Activated CD8-positive, alpha-beta T cell treated with anti-CD3 and anti-CD28 coated beads, Interleukin-2, amount 10 ng/mL, durations not matched to agents 7 days and 5 days (primary cell): ENCODE measurements at regions of chr2 and their contacts with region 1.

Region 1: GRCh38 chr2:27370026-27370815 is at the starts of genes EIF2B4 and SNX17:
- DNase-seq: peak; percentile 99
- ATAC-seq: peak; percentile 95
- H3K4me3 Mint-ChIP-seq: peak within 1 kb of the TSS; percentile 98
- H3K27ac Mint-ChIP-seq: peak within 1 kb of the TSS; percentile 95
- H3K4me1 Mint-ChIP-seq: peaks cover 49% of the 10 kb centered on the region
- H3K27me3 Mint-ChIP-seq: no peaks in the 10 kb centered on the region
- total RNA-seq, gene EIF2B4: 34.5 to 37.0 TPM
- total RNA-seq, gene SNX17: 119 to 120 TPM

Region 2: DNA sequence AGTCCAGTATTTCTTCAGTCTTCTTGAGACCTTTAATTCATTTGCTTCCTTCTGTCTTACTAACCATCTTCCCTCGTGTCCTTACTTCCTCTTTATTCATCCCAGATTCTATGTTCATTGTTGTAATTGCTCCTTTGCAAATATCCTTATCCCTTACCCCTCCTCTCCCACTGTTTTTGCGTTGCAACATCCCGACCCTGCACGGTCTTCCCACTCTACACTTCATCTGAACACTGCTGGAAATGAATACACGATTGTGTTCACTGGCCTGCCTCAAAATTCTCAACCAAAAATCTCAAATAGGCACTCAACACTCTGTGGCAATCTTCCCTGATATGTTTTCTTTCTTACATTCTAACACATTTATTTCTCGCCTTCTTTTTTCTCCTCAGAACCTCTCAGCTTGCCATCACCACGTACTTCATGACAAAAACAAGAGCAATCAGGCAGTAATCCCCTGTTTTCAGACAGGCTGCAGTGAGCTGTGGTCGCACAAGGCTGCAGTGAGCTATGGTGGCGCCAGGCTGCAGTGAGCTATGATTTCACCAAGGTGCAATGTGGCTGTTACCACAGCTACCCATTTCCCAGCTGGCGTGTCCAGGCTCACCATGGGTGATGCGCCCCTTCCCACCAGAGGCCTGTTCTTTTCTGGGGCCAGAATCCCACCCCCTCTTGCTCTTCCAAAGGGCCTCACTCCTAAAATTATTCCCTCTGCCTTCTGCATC is 195.7 kb before region 1 on chr2:
- CTCF ChIA-PET with region 1: no interaction called
- POLR2A ChIA-PET with region 1: no interaction called
- DNase-seq: no peak
- ATAC-seq: no peak
- H3K4me3 Mint-ChIP-seq: no peak overlapping the region
- H3K27ac Mint-ChIP-seq: no peak overlapping the region
- H3K4me1 Mint-ChIP-seq: peaks cover 2% of the 10 kb centered on the region
- H3K27me3 Mint-ChIP-seq: peaks cover 31% of the 10 kb centered on the region

Region 3: GRCh38 chr2:27322766-27323595 is 47.2 kb before region 1 on chr2 and contains the start of gene MPV17:
- CTCF ChIA-PET with region 1: interaction called, 13 read pairs
- POLR2A ChIA-PET with region 1: interaction called, 8 read pairs
- DNase-seq: peak; percentile 92
- ATAC-seq: peak; percentile 96
- H3K4me3 Mint-ChIP-seq: peak within 1 kb of the TSS; percentile 98
- H3K27ac Mint-ChIP-seq: peak within 1 kb of the TSS; percentile 98
- H3K4me1 Mint-ChIP-seq: peaks cover 22% of the 10 kb centered on the region
- H3K27me3 Mint-ChIP-seq: no peaks in the 10 kb centered on the region
- total RNA-seq, gene MPV17: 78.0 to 80.5 TPM

Region 4: GRCh38 chr2:27347641-27348040 is 22.6 kb before region 1 on chr2:
- CTCF ChIA-PET with region 1: interaction called, 15 read pairs
- POLR2A ChIA-PET with region 1: interaction called, 3 read pairs
- DNase-seq: no peak
- ATAC-seq: no peak
- H3K4me3 Mint-ChIP-seq: no peak overlapping the region
- H3K27ac Mint-ChIP-seq: no peak overlapping the region
- H3K4me1 Mint-ChIP-seq: peaks cover 16% of the 10 kb centered on the region
- H3K27me3 Mint-ChIP-seq: no peaks in the 10 kb centered on the region

Region 5: DNA sequence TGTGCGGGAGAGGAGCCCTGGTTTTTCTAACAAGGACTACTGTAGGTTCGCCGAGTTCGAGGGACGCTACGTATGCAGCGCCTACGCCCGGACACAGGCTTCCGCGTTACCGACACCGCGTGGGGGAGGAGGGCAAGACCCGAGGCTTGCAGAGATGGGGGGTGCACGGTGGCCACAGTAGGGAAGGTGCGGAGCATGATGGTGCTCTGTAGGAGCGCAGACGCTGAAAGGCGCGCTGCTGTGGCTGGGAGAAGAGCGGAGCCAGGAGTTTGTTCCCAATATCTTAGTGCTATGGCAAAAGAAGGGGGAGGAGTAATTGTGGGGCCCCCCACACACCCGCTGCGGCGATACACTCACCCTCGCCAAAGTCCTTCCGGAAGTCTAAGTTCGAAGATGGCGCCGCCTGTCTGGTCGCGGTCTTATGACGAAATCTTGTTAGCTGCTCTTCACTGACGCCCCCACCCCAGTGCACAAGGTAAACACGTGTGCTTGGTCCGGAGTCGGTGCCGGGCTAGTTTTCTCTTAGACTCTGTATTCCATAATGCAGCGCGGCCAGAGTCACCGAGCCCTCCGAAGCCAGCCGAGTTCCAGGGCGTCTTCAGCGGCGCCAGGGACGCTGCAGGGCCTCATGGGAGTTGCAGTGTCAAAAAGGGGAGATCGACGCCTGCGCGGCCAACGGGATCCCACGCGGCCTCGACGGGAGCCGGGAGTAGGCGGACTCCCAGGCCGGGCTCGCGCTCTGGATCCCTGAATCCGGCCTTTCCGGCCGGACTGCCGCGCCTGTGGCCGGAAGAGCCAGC is 13.6 kb before region 1 on chr2 and contains the start of gene GTF3C2:
- CTCF ChIA-PET with region 1: interaction called, 15 read pairs
- POLR2A ChIA-PET with region 1: interaction called, 38 read pairs
- DNase-seq: peak; percentile 96
- ATAC-seq: peak; percentile 84
- H3K4me3 Mint-ChIP-seq: peak within 1 kb of the TSS; percentile 99
- H3K27ac Mint-ChIP-seq: peak within 1 kb of the TSS; percentile 97
- H3K4me1 Mint-ChIP-seq: peaks cover 47% of the 10 kb centered on the region
- H3K27me3 Mint-ChIP-seq: no peaks in the 10 kb centered on the region
- total RNA-seq, gene GTF3C2: 60.9 to 62.6 TPM

Region 6: GRCh38 chr2:27380626-27381545 is 10.7 kb after region 1 on chr2 and contains the start of gene ZNF513:
- CTCF ChIA-PET with region 1: interaction called, 12 read pairs
- POLR2A ChIA-PET with region 1: interaction called, 57 read pairs
- DNase-seq: peak; percentile 90
- ATAC-seq: peak; percentile 85
- H3K4me3 Mint-ChIP-seq: peak within 1 kb of the TSS; percentile 90
- H3K27ac Mint-ChIP-seq: peak within 1 kb of the TSS; percentile 97
- H3K4me1 Mint-ChIP-seq: peaks cover 33% of the 10 kb centered on the region
- H3K27me3 Mint-ChIP-seq: no peaks in the 10 kb centered on the region
- total RNA-seq, gene ZNF513: 11.8 to 13.3 TPM